ENCODE measurements at regions of chr7 and their contacts with region 1.

Region 1: DNA sequence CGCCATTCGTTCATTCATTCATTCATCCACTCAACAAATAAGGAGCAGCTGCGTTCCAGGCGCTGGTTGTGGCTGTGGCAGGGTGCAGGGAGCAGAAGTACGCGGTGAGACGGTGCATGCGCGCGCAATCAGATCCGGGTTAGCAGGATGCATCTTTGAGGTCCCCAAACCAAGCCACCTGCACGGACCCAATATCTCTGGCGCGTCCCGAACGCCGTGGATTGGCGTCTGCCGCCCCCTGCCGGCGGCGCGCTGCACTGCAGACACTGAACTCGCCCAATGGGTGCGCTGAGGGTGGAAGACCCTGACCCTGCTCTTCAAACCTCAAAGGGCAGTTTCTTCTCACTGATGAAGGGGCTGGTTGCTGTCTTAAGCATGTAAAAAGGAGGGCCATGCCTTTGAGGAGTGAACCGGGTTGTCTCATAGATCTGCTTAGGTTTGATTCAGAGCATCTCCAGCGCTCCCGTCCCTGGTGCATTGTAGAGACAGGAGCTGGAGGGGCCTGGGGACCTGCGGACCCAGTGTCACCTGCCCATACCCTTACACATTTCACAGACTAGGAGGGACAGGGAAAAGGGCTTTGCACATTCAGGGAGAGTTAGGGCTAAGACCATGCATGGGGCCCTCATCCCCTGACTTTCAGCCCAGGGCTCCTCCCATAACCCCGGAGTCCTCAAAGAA is 102.5 kb downstream of the RAMP3 start:
- DNase-seq: peak; percentile 78

Region 2: GRCh38 chr7:45153233-45153632 is 106.9 kb before region 1 on chr7:
- CTCF ChIA-PET with region 1: interaction called, 10 read pairs
- POLR2A ChIA-PET with region 1: no interaction called
- DNase-seq: no peak

Measured in HEK293T (cell line).